CD8-positive, alpha-beta T cell (primary cell): ENCODE measurements at regions of chr17 and their contacts with region 1.

Region 1: GRCh38 chr17:18183334-18184142 is at the start of gene ALKBH5:
- DNase-seq: peak; percentile 93 to 99 (median 98)
- ATAC-seq: peak; percentile 77
- H3K4me3 ChIP-seq: peak within 1 kb of the TSS; percentile 58 to 81
- H3K4me3 Mint-ChIP-seq: peak within 1 kb of the TSS; percentile 95
- H3K27ac ChIP-seq: peak within 1 kb of the TSS; percentile 92 to 95
- H3K27ac Mint-ChIP-seq: peak within 1 kb of the TSS; percentile 97
- H3K4me1 ChIP-seq: peaks cover 42% of the 10 kb centered on the region
- H3K4me1 Mint-ChIP-seq: peaks cover 47% of the 10 kb centered on the region
- H3K27me3 ChIP-seq: no peaks in the 10 kb centered on the region
- H3K27me3 Mint-ChIP-seq: no peaks in the 10 kb centered on the region
- CTCF ChIP-seq: peak; percentile 73
- total RNA-seq, gene ALKBH5: 138 to 141 TPM

Region 2: GRCh38 chr17:17280613-17281549 is 902.7 kb before region 1 on chr17 and contains the start of gene COPS3:
- CTCF ChIA-PET with region 1: no interaction called
- POLR2A ChIA-PET with region 1: no interaction called
- intact Hi-C with region 1: loop called in 1 of 2 experiments (anchors 2 kb)
- DNase-seq: peak; percentile 91 to 99 (median 97)
- ATAC-seq: peak; percentile 88
- H3K4me3 ChIP-seq: peak within 1 kb of the TSS; percentile 74 to 93
- H3K4me3 Mint-ChIP-seq: peak within 1 kb of the TSS; percentile 96
- H3K27ac ChIP-seq: peak within 1 kb of the TSS; percentile 74 to 92
- H3K27ac Mint-ChIP-seq: peak within 1 kb of the TSS; percentile 87
- H3K4me1 ChIP-seq: peaks cover 26% of the 10 kb centered on the region
- H3K4me1 Mint-ChIP-seq: peaks cover 38% of the 10 kb centered on the region
- H3K27me3 ChIP-seq: no peaks in the 10 kb centered on the region
- H3K27me3 Mint-ChIP-seq: no peaks in the 10 kb centered on the region
- CTCF ChIP-seq: no peak
- total RNA-seq, gene COPS3: 94.1 to 96.3 TPM

Region 3: GRCh38 chr17:18038861-18039534 is 144.5 kb before region 1 on chr17 and contains the starts of genes ATPAF2 and GID4:
- CTCF ChIA-PET with region 1: no interaction called
- POLR2A ChIA-PET with region 1: interaction called, 3 read pairs
- intact Hi-C with region 1: loop called (anchors 1 to 2 kb)
- DNase-seq: peak; percentile 99 to 100 (median 100)
- ATAC-seq: peak; percentile 90
- H3K4me3 ChIP-seq: peak within 1 kb of the TSS; percentile 85 to 92
- H3K4me3 Mint-ChIP-seq: peak within 1 kb of the TSS; percentile 92
- H3K27ac ChIP-seq: peak within 1 kb of the TSS; percentile 63 to 84
- H3K27ac Mint-ChIP-seq: peak within 1 kb of the TSS; percentile 91
- H3K4me1 ChIP-seq: peaks cover 34% of the 10 kb centered on the region
- H3K4me1 Mint-ChIP-seq: peaks cover 56% of the 10 kb centered on the region
- H3K27me3 ChIP-seq: no peaks in the 10 kb centered on the region
- H3K27me3 Mint-ChIP-seq: no peaks in the 10 kb centered on the region
- CTCF ChIP-seq: no peak
- total RNA-seq, gene ATPAF2: 16.8 to 24.5 TPM
- total RNA-seq, gene GID4: 2.7 to 5.0 TPM

Region 4: DNA sequence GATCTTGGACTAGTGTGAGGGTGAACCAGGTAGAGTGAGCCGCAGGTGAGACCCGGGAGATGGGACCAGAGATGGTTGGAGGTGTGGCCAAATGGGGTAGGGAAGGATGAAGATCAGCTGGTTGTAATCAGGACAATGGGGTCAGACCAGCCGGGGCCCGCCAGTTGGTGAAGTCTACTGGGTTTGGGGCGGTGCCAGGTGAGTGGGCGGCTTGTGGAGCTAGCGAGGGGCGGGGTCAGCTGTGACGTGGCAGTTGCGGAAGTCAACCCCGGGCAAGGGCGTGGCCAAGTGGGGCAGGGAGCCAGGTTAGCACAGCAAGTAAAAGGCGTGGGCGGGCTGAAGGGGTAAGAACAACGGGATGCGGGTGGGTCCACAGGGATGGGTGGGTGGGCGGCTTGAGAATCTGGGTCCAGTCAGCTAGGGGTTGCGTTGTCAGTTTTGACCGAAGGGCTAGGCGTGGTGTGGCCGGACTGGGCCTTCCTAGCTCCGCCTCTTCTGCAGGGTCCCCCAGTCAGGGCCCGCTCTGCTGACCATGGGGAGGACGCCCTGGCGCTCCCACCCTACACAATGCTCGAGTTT is 25.4 kb before region 1 on chr17:
- CTCF ChIA-PET with region 1: no interaction called
- POLR2A ChIA-PET with region 1: interaction called, 12 read pairs
- intact Hi-C with region 1: loop called (anchors 1 kb)
- DNase-seq: peak; percentile 88 to 96 (median 94)
- ATAC-seq: peak; percentile 91
- H3K4me3 ChIP-seq: peak overlapping the region; percentile 45 to 61
- H3K4me3 Mint-ChIP-seq: peak overlapping the region; percentile 85
- H3K27ac ChIP-seq: peak overlapping the region; percentile 47 to 51
- H3K27ac Mint-ChIP-seq: peak overlapping the region; percentile 88
- H3K4me1 ChIP-seq: peaks cover 13% of the 10 kb centered on the region
- H3K4me1 Mint-ChIP-seq: peaks cover 19% of the 10 kb centered on the region
- H3K27me3 ChIP-seq: no peaks in the 10 kb centered on the region
- H3K27me3 Mint-ChIP-seq: no peaks in the 10 kb centered on the region
- CTCF ChIP-seq: no peak

Region 5: DNA sequence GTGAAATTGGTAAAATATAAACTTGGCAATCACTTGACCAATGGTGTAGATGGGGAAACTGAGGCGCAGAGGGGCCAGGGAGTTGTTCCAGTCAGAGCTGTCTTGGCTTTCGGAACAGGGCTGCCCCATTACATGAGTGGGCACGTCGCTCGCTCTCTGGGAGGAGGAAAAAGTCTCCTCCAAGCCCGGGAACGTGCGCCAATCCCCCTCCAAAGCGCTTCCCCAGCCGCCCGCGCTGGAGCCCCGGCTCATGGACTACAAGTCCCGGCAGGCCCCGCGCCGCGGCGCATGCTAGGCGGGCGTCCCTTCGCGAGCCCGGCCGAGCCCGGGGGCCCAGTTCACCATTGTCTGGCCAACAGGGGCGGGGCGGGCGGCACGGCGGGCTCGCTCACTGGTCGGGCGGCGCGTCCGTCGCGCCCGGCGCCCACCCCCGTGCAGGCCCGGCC is 41.6 kb after region 1 on chr17:
- CTCF ChIA-PET with region 1: no interaction called
- POLR2A ChIA-PET with region 1: interaction called, 7 read pairs
- intact Hi-C with region 1: loop called (anchors 1 kb)
- DNase-seq: peak; percentile 92 to 98 (median 96)
- ATAC-seq: peak; percentile 98
- H3K4me3 ChIP-seq: peak overlapping the region; percentile 39 to 43
- H3K4me3 Mint-ChIP-seq: peak overlapping the region; percentile 63
- H3K27ac ChIP-seq: peak overlapping the region in 1 of 2 experiments; percentile 31
- H3K27ac Mint-ChIP-seq: no peak overlapping the region
- H3K4me1 ChIP-seq: peaks cover 17% of the 10 kb centered on the region
- H3K4me1 Mint-ChIP-seq: peaks cover 29% of the 10 kb centered on the region
- H3K27me3 ChIP-seq: no peaks in the 10 kb centered on the region
- H3K27me3 Mint-ChIP-seq: no peaks in the 10 kb centered on the region
- CTCF ChIP-seq: no peak

Region 6: GRCh38 chr17:19260958-19261357 is 1077.4 kb after region 1 on chr17:
- CTCF ChIA-PET with region 1: no interaction called
- POLR2A ChIA-PET with region 1: no interaction called
- intact Hi-C with region 1: no loop called
- DNase-seq: no peak
- ATAC-seq: no peak
- H3K4me3 ChIP-seq: no peak overlapping the region
- H3K4me3 Mint-ChIP-seq: no peak overlapping the region
- H3K27ac ChIP-seq: no peak overlapping the region
- H3K27ac Mint-ChIP-seq: no peak overlapping the region
- H3K4me1 ChIP-seq: no peaks in the 10 kb centered on the region
- H3K4me1 Mint-ChIP-seq: no peaks in the 10 kb centered on the region
- H3K27me3 ChIP-seq: peaks cover 0 to 4% of the 10 kb centered on the region in 2 experiments
- H3K27me3 Mint-ChIP-seq: peaks cover 32% of the 10 kb centered on the region
- CTCF ChIP-seq: no peak

Region 7: GRCh38 chr17:19377602-19378392 is 1194.3 kb after region 1 on chr17:
- CTCF ChIA-PET with region 1: no interaction called
- POLR2A ChIA-PET with region 1: no interaction called
- intact Hi-C with region 1: loop called (anchors 5 to 10 kb)
- DNase-seq: peak; percentile 82 to 98 (median 93)
- ATAC-seq: peak; percentile 89
- H3K4me3 ChIP-seq: peak overlapping the region; percentile 81 to 96
- H3K4me3 Mint-ChIP-seq: peak overlapping the region; percentile 100
- H3K27ac ChIP-seq: peak overlapping the region; percentile 81 to 86
- H3K27ac Mint-ChIP-seq: peak overlapping the region; percentile 96
- H3K4me1 ChIP-seq: peaks cover 6% of the 10 kb centered on the region
- H3K4me1 Mint-ChIP-seq: peaks cover 15% of the 10 kb centered on the region
- H3K27me3 ChIP-seq: no peaks in the 10 kb centered on the region
- H3K27me3 Mint-ChIP-seq: no peaks in the 10 kb centered on the region
- CTCF ChIP-seq: no peak